Activated CD8-positive, alpha-beta memory T cell treated with anti-CD3 and anti-CD28 coated beads, Interleukin-2, amount 10 ng/mL, durations not matched to agents 7 days and 5 days (primary cell): ENCODE measurements at regions of chr2 and their contacts with region 1.

Region 1: GRCh38 chr2:173027181-173028128 is 48.2 kb upstream of the MAP3K20 start:
- DNase-seq: peak; percentile 82
- ATAC-seq: peak; percentile 68
- H3K4me3 Mint-ChIP-seq: no peak overlapping the region
- H3K27ac Mint-ChIP-seq: no peak overlapping the region
- H3K4me1 Mint-ChIP-seq: no peaks in the 10 kb centered on the region
- H3K27me3 Mint-ChIP-seq: peaks cover 45% of the 10 kb centered on the region

Region 2: GRCh38 chr2:172623249-172623965 is 404.0 kb before region 1 on chr2:
- CTCF ChIA-PET with region 1: no interaction called
- DNase-seq: no peak
- ATAC-seq: no peak
- H3K4me3 Mint-ChIP-seq: no peak overlapping the region
- H3K27ac Mint-ChIP-seq: no peak overlapping the region
- H3K4me1 Mint-ChIP-seq: no peaks in the 10 kb centered on the region
- H3K27me3 Mint-ChIP-seq: no peaks in the 10 kb centered on the region

Region 3: DNA sequence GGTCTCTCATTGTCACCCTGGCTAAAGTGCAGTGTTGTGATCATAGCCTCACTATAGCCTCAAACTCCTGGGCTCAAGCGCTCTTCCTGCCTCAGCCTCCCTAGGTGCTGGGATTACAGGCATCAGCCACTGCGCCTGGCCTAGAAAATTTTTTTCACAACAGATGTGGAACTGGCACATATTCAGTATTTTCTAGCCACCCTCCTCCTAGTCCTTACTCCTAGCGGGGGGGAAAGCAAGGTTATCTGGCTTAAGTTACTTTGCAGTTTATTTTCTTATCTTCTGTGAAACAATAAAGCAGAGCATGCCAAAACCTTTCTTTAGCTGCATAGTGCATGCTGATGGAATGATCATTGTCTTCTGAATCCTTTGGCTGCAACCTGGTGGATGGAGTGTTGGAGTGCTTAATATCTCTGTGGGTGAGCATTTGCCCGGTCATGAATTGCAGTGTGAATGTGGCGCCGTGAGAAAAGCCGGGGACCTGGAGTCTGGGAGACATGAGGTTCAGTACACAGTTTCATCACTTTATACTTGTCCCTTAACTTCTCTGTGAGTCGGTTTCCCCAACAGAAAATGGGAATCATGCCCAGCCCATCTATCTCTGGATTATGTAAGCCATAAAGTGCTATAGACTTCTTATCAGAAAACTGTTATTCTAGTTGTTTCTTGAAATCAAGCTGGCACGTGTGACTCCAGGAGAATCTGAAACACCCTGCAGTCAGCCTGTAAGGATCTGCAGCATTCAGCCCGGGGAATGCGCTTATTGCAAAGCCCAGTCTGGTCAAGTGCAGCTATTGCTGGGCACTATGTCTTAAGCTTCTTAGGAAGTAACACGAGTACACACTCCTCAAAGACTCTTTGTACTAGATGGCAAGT is 10.0 kb after region 1 on chr2:
- CTCF ChIA-PET with region 1: no interaction called
- DNase-seq: no peak
- ATAC-seq: no peak
- H3K4me3 Mint-ChIP-seq: no peak overlapping the region
- H3K27ac Mint-ChIP-seq: no peak overlapping the region
- H3K4me1 Mint-ChIP-seq: no peaks in the 10 kb centered on the region
- H3K27me3 Mint-ChIP-seq: peaks cover 34% of the 10 kb centered on the region

Region 4: GRCh38 chr2:173048897-173049661 is 21.6 kb after region 1 on chr2:
- CTCF ChIA-PET with region 1: no interaction called
- DNase-seq: peak; percentile 51
- ATAC-seq: peak; percentile 86
- H3K4me3 Mint-ChIP-seq: no peak overlapping the region
- H3K27ac Mint-ChIP-seq: no peak overlapping the region
- H3K4me1 Mint-ChIP-seq: peaks cover 16% of the 10 kb centered on the region
- H3K27me3 Mint-ChIP-seq: peaks cover 51% of the 10 kb centered on the region

Region 5: GRCh38 chr2:173210270-173211196 is 183.1 kb after region 1 on chr2:
- CTCF ChIA-PET with region 1: interaction called, 126 read pairs
- DNase-seq: peak; percentile 58
- ATAC-seq: peak; percentile 71
- H3K4me3 Mint-ChIP-seq: no peak overlapping the region
- H3K27ac Mint-ChIP-seq: no peak overlapping the region
- H3K4me1 Mint-ChIP-seq: no peaks in the 10 kb centered on the region
- H3K27me3 Mint-ChIP-seq: peaks cover 9% of the 10 kb centered on the region

Region 6: DNA sequence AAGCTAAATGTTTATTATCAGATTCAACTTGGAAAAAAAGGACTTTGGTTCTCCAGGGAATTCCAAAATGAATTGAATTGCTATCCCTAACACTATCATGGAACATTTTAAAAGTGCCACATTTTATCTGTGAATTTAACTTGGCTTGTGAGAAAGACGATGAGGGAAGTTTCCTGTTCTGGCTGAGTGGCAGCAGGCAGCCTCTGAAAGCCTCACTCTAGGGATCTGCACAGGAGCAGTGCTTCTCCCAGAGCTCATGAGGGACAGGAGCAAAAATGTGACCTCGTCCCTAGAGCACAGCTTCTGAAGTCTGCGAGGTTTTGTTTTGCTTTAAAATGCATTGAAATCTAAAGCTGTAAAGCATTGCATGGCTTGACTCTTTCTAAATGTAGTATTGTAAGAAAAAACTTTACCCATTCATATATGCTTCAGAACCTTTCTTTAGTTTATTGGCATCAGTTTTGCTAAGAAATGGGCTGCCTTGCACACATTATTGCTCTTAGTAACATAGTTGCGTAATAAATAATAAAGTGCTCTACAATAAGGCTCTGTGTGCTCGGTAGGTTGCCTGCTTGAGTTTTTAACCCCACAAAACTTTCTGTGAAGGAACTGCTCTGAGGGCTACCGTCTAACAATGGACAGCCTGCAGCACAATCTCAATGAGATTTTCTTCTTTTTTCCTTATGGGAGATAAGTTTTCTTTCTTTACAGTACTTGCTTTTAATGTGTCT is 191.0 kb after region 1 on chr2:
- CTCF ChIA-PET with region 1: interaction called, 126 read pairs
- DNase-seq: no peak
- ATAC-seq: no peak
- H3K4me3 Mint-ChIP-seq: no peak overlapping the region
- H3K27ac Mint-ChIP-seq: no peak overlapping the region
- H3K4me1 Mint-ChIP-seq: peaks cover 9% of the 10 kb centered on the region
- H3K27me3 Mint-ChIP-seq: peaks cover 14% of the 10 kb centered on the region

Region 7: DNA sequence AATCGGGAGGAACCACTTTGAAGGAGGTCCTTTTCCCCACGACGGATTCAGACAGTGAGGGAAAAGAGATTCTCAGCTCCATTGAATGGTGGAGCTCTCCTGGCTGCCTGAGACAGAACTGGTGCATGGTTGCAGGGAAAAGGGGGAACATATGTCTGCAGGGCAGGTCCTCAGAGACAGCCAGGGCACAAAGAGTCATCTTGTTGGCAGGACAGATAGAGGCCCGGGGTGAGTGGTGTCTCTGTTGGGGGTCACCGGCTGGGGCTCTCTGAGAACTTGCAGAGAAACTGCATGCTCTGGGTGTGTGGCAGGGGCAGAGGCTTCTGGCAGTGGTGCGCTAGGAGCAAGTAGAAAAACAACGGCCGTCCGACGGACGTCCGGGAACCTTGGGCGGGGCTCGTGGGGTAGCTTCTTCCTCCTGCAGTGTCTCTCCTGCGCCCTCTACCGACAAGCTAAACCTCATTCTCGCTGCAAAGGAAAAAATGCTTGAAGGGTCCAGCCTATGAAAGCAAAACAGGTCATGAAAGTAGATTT is 421.6 kb after region 1 on chr2:
- CTCF ChIA-PET with region 1: interaction called, 12 read pairs
- DNase-seq: peak; percentile 84
- ATAC-seq: peak; percentile 79
- H3K4me3 Mint-ChIP-seq: peak overlapping the region; percentile 53
- H3K27ac Mint-ChIP-seq: peak overlapping the region; percentile 70
- H3K4me1 Mint-ChIP-seq: peaks cover 15% of the 10 kb centered on the region
- H3K27me3 Mint-ChIP-seq: peaks cover 35% of the 10 kb centered on the region